ENCODE measurements at regions of chr13 and their contacts with region 1.

Region 1: DNA sequence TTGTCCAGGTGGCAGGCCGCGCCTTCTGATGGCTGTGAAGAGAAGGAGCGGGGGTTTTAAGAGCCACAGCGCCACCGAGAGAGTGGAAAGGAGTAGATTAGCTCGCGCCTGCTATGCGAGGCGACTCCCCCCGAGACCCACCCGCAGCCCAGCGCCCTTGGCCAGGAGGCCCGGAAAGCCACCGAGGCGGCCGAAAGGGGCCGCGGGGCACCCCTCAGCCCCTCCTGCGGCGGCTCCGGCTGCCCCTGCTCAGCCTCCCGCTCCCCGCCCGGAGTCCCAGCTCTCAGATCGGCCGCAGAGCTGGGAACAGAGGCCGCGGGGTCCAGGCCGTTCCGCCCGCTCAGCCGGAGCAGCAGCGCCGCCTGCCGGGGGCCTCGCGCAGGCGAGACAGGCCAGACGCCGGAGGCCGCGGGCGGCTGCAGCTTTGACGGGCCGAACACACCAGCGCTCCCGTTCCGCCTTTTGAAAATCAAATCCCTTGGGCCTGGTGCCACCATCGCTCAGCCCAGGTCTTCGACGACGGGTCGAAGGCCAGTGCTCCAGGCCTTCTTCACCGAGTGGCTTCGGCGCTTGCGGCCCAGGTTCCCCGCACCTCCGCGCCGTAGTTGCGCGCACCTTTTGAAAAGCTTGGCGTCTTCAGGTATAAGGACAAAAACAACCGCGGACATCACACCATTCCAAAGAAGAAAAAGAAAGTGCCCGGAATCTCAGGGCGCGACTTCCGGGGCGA is 15.3 kb downstream of the CDX2 start:
- H3K4me3 ChIP-seq: peak overlapping the region; percentile 39
- H3K27ac ChIP-seq: peak overlapping the region; percentile 46; the same call in 1 of the 2 replicates
- H3K4me1 ChIP-seq: no peaks in the 10 kb centered on the region; the same call in 1 of the 2 replicates
- CTCF ChIP-seq: peak; percentile 67

Region 2: GRCh38 chr13:27770809-27771208 is 183.0 kb before region 1 on chr13:
- CTCF ChIA-PET with region 1: interaction called, 11 read pairs
- POLR2A ChIA-PET with region 1: no interaction called
- H3K4me3 ChIP-seq: no peak overlapping the region
- H3K27ac ChIP-seq: no peak overlapping the region
- H3K4me1 ChIP-seq: no peaks in the 10 kb centered on the region
- CTCF ChIP-seq: peak; percentile 34

Region 3: DNA sequence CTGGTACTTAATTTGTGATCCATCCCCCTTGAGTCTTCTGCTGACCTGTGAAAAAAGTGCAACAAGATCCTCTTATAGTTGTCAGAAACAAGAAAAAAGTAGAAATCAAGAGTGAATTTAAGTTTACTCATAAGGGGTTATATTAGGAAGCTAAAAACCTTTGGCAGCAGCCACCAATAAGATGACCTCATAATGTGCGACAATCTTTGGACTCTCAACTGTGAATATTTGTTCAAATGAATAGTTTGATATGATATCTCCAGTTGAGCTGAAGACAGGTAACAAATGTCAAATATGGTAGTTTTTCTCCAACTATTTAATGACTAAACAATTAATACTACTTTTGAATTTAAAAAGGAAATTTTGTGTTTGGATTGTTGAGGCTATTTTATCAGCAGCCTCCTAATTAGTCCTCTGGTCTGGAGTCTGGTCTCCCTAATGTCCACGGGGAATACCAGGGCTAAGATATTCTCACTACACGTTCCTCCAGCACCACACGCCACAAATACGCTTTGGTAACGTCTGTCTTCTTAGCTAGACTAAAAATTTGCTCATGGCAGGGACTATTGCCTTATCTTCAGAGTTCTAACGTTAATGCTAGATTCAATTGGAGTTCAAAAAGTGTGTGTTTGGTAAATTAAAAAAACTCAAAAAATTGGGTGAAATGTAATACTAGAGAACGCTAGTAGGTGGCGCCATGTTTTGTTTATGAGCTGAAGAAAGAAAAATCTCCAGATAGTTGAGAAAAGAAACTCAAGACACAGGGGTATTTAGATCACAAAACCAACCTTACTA is 85.0 kb before region 1 on chr13:
- CTCF ChIA-PET with region 1: interaction called, 34 read pairs
- POLR2A ChIA-PET with region 1: interaction called, 4 read pairs
- H3K4me3 ChIP-seq: no peak overlapping the region
- H3K27ac ChIP-seq: no peak overlapping the region
- H3K4me1 ChIP-seq: no peaks in the 10 kb centered on the region
- CTCF ChIP-seq: no peak

Region 4: GRCh38 chr13:28031220-28031895 is 77.5 kb after region 1 on chr13:
- CTCF ChIA-PET with region 1: no interaction called
- POLR2A ChIA-PET with region 1: no interaction called
- H3K4me3 ChIP-seq: no peak overlapping the region
- H3K27ac ChIP-seq: no peak overlapping the region
- H3K4me1 ChIP-seq: no peaks in the 10 kb centered on the region
- CTCF ChIP-seq: no peak

Measured in HEK293 (cell line).